Panc1 (cell line): ENCODE measurements at regions of chr4 and their contacts with region 1.

Region 1: GRCh38 chr4:158253350-158253980 is 43.2 kb downstream of the TMEM144 start:
- DNase-seq: peak; percentile 41
- ATAC-seq: peak; percentile 75; the same call in 1 of the 2 replicates
- H3K4me3 ChIP-seq: no peak overlapping the region
- H3K27ac ChIP-seq: no peak overlapping the region
- H3K4me1 ChIP-seq: no peaks in the 10 kb centered on the region
- H3K27me3 ChIP-seq: no peaks in the 10 kb centered on the region
- CTCF ChIP-seq: peak; percentile 66

Region 2: DNA sequence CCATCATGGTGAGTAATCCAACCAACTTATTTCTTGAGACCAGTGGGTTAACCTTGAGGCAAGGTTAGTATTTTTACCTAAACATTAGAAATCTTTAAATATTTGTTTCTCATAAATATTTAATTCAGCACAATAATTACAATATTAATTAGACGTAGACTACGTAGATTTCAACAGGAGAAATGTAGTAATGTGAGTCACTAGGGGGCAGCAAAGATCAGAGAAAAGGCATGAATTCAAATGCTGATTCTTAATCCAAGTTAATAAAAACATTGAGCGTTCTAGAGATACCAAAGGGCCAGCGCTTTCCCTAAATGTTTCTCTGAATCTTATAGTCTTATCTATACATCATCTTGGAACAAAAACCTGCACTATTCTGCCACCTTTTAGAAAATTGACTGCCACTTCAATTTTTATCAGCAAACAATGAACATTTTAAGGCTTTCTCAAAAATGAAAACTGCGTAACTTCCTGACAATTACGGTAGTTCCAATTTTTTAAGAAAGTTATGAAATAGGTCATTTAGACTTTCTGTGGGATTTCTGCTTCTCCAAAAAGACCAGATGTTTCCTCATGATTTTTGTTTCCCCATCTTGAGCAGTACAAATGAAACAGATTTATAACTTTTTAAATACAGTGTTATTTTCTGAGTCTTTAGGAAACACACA is 261.3 kb before region 1 on chr4:
- CTCF ChIA-PET with region 1: no interaction called
- POLR2A ChIA-PET with region 1: no interaction called
- in situ Hi-C with region 1: no loop called
- intact Hi-C with region 1: loop called (anchors 2 kb)
- DNase-seq: no peak
- ATAC-seq: no peak
- H3K4me3 ChIP-seq: no peak overlapping the region; a peak in 1 of 4 replicates
- H3K27ac ChIP-seq: no peak overlapping the region
- H3K4me1 ChIP-seq: no peaks in the 10 kb centered on the region; the same call in 1 of the 2 replicates
- H3K27me3 ChIP-seq: no peaks in the 10 kb centered on the region
- CTCF ChIP-seq: peak; percentile 50; the same call in 1 of the 2 replicates

Region 3: DNA sequence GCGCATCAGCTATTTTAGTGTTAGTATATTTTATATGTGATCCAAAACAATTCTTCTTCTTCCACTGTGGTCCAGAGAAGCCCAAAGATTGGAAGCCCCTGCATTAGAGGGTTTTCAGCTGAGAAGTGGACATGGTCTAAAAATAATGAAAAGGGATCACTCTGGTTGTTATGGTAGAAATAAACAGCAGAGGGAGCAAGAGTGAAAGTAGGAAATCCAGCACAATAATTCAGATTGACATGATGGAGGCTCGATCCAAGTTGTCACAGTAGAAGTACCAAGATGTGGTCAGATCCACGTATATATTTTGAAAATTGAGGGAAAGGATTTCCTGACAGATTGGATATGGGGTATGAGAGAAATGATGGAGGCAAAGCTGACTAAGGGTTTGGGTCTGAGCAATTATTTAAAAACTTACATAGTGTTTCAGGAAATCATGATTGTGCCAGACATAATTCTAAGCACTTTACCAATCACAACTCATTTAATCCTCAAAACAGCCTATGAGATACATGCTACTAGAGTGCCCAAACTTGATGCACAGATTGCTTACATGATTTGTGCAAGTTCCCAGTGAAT is 60.2 kb before region 1 on chr4:
- CTCF ChIA-PET with region 1: interaction called, 5 read pairs
- POLR2A ChIA-PET with region 1: no interaction called
- in situ Hi-C with region 1: no loop called
- intact Hi-C with region 1: loop called (anchors 5 kb)
- DNase-seq: no peak
- ATAC-seq: no peak
- H3K4me3 ChIP-seq: no peak overlapping the region
- H3K27ac ChIP-seq: no peak overlapping the region
- H3K4me1 ChIP-seq: no peaks in the 10 kb centered on the region
- H3K27me3 ChIP-seq: no peaks in the 10 kb centered on the region
- CTCF ChIP-seq: peak; percentile 63

Region 4: GRCh38 chr4:158500054-158500453 is 246.6 kb after region 1 on chr4:
- CTCF ChIA-PET with region 1: no interaction called
- POLR2A ChIA-PET with region 1: no interaction called
- in situ Hi-C with region 1: no loop called
- intact Hi-C with region 1: no loop called
- DNase-seq: no peak
- ATAC-seq: no peak
- H3K4me3 ChIP-seq: no peak overlapping the region
- H3K27ac ChIP-seq: no peak overlapping the region
- H3K4me1 ChIP-seq: no peaks in the 10 kb centered on the region
- H3K27me3 ChIP-seq: no peaks in the 10 kb centered on the region
- CTCF ChIP-seq: no peak